Thyroid gland (tissue), 4 donors: ENCODE measurements at regions of chr12 and their contacts with region 1.

Region 1: GRCh38 chr12:97292588-97292987 is 170.0 kb upstream of the RMST start:
- DNase-seq: no peak
- H3K4me3 ChIP-seq: no peak overlapping the region
- H3K27ac ChIP-seq: no peak overlapping the region
- H3K4me1 ChIP-seq: no peaks in the 10 kb centered on the region
- H3K27me3 ChIP-seq: no peaks in the 10 kb centered on the region
- CTCF ChIP-seq: no peak
- POLR2A ChIP-seq: no peak

Region 2: DNA sequence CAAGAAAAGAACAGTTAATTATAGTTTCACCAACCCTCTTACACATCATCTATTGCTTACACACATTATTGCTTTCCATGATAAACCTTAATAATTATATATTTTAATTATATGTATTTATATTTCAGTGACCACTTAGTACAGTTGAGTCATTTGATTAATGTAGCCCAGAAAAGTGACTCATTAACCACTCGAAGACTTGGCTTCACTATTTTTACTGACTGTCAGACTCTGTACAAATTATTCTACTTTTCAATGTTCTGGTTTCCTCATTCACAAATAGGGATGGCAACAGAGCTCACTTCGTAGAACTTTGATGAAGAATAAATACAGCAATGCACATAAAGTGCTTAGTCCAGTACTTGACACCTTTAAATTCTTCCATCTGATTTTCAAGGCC is 704.9 kb before region 1 on chr12:
- intact Hi-C with region 1: loop called (anchors 10 kb)
- DNase-seq: no peak
- H3K4me3 ChIP-seq: no peak overlapping the region
- H3K27ac ChIP-seq: no peak overlapping the region
- H3K4me1 ChIP-seq: no peaks in the 10 kb centered on the region
- H3K27me3 ChIP-seq: no peaks in the 10 kb centered on the region
- CTCF ChIP-seq: no peak
- POLR2A ChIP-seq: no peak

Region 3: DNA sequence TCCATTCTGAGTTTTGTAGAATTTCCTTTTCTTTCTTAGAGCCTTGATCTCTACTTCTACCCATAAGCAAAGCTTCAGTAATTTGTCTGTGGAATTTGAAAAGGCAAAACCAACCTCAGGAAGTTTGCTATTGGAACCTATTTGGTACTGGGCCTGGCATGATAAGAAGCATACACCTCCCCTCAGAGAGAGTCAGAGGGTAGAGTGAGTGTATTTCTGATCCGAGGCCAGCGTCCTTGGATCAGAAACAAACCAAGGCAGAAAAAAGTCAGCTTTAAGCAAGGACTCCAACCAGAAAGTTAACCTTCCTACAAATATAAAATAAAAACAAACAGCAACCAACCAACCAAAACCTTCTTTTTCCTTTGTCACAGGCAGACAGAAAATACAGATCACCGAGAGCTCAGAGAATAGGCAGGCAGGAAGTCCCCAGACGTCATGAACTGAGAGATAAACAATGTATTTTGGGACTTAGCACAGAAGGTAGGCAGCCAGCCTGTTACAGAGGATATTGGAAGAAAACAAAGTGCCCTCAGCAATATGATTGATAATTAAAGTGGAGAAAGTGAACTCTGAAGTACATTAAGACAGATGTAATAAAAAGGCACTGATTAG is 244.1 kb before region 1 on chr12:
- intact Hi-C with region 1: no loop called
- DNase-seq: peak; percentile 33 to 40
- H3K4me3 ChIP-seq: no peak overlapping the region
- H3K27ac ChIP-seq: peak overlapping the region; percentile 72 to 87 (median 83)
- H3K4me1 ChIP-seq: peaks cover 17 to 18% of the 10 kb centered on the region in 2 donors
- H3K27me3 ChIP-seq: no peaks in the 10 kb centered on the region
- CTCF ChIP-seq: no peak
- POLR2A ChIP-seq: peak in 1 of 2 donors; percentile 33